Head of caudate nucleus (tissue), 42 donors: ENCODE measurements at regions of chr6 and their contacts with region 1.

Region 1: GRCh38 chr6:28136585-28137504 is 4.8 kb upstream of the ZKSCAN8 start:
- DNase-seq: peak; percentile 77 to 96 (median 89)

Region 2: GRCh38 chr6:27630727-27631608 is 505.9 kb before region 1 on chr6:
- intact Hi-C with region 1: no loop called
- DNase-seq: peak; percentile 32 to 86 (median 68)

Region 3: DNA sequence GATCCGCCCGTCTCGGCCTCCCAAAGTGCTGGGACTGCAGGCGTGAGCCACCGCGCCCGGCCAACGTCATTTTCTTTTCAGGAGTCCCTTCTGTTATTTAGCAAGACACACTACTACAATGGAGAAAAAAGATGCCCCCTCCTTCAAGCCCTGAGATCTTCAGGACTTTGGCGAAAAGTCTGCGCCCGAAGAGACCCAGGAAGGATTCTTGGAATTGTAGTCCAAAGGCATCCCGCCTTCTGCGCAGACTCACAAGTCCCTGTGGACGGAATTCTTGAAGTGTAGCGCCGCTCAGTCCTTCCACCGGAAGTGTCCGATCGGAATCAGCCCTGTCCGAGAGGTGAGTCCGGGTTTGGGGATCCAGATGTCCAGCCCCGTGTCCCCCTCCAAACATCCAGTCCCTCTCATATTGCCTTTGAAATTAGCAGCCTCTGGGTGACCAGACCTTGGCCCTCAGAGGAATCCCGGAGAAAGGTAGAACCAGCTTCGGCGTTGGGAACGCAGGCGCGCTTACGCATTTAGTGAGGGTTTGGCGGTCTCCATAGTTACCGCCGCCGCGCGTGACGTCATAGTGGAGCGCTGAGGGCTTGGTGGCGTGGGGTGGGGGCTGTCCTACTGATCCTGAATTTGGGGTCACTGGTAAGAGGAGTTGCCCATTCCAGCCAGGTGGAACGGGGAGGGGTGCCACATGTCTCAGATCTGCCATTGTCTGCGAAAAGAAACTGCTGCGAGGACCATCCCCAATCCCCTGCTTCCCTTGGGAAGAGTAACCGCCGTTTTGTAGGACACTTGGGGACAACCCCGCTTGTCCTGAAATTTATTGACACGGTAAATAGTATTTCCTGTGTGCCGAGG is 56.0 kb before region 1 on chr6:
- intact Hi-C with region 1: loop called (anchors 10 kb)
- DNase-seq: peak; percentile 87 to 96 (median 93)

Region 4: DNA sequence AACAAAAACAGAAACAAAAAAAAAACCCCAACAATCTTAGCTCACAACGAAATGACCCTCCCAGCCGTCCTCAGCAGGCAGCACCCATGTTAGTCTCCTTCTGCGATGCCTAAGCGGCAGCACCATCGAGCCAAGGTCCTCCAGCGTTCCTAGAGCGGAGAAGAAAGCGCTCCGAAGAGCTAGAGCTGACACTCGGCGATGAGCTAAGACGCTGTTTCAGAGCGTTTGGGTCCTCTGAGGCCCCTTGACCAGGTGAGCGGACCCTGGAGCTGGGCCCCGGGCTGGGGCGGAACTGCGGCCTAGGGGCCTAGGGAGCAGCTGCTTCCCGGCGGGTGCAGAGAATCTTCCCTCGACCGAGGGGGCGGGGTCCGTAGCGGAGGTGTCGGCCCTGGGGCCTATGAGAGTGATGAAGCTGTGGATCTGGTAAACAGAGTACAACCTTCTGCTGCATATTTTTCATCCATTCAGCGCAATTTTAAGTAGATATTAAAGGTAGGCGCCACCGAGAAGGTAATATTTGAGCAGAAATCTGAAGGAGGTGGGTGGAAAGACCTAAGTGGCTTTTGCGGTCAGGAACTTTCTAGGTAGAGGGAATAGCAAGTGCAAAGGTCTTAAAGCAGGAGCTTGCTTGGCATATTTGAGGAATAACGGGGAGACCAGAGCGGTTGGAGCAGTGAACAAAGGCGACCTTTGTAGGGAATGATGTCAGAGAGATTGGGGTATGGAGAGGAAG is 130.3 kb after region 1 on chr6 and contains the start of gene ZSCAN26:
- intact Hi-C with region 1: loop called (anchors 5 kb)
- DNase-seq: peak; percentile 67 to 93 (median 86)

Region 5: GRCh38 chr6:28355743-28356665 is 219.2 kb after region 1 on chr6:
- intact Hi-C with region 1: loop called (anchors 10 kb)
- DNase-seq: peak; percentile 51 to 93 (median 75)